Body of pancreas (tissue), 4 donors: ENCODE measurements at regions of chr16 and their contacts with region 1.

Region 1: GRCh38 chr16:4402439-4403132 is 13.8 kb downstream of the CORO7 start:
- DNase-seq: peak; percentile 79 to 89 (median 85)
- ATAC-seq: peak; percentile 93
- H3K4me3 ChIP-seq: no peak overlapping the region
- H3K27ac ChIP-seq: no peak overlapping the region
- H3K4me1 ChIP-seq: peaks cover 7% of the 10 kb centered on the region
- H3K27me3 ChIP-seq: no peaks in the 10 kb centered on the region
- CTCF ChIP-seq: peak; percentile 89 to 95 (median 92)
- POLR2A ChIP-seq: no peak

Region 2: DNA sequence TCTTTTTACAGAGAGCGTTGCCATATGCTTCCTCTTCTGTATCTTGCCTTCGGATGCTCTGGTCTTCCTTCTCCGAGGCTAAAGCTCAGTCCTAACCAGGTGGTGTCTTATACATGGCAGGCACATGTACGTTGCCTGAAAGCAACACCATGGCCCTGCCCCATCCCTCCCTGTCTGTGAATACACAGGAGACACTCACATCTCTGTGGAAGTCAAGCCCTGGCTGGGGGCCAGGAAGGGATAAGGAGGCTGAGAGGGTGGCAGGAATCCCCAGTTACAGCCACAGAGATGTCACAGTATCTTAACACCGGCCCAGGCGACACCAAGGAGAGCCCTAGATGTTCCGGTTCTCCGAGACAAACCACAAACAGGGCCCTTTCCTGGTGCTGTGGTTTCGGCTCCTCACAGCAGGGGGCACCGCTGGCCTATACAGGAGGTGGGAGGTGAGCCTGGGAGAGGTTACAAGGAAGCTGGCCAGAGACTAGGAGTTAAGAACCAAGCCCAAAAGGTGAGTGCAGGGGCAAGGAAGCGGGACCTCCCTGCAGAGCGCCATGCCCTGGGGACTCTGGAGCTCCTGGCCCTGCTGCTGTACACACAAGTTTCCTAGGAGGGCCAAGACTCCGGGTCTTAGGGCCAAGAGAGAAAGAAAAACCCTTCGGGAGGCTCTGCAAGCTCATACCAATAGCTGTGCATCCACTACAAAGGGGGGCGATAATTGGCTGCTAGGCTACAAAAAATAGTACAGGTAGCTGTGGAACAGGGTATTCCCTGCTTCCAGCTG is 202.4 kb before region 1 on chr16:
- intact Hi-C with region 1: loop called (anchors 10 kb)
- DNase-seq: peak; percentile 77 to 84 (median 78)
- ATAC-seq: peak; percentile 94
- H3K4me3 ChIP-seq: no peak overlapping the region
- H3K27ac ChIP-seq: no peak overlapping the region
- H3K4me1 ChIP-seq: peaks cover 7% of the 10 kb centered on the region
- H3K27me3 ChIP-seq: no peaks in the 10 kb centered on the region
- CTCF ChIP-seq: peak; percentile 52 to 88 (median 78)
- POLR2A ChIP-seq: no peak

Region 3: GRCh38 chr16:4232541-4233386 is 169.8 kb before region 1 on chr16:
- intact Hi-C with region 1: no loop called
- DNase-seq: no peak
- ATAC-seq: no peak
- H3K4me3 ChIP-seq: no peak overlapping the region
- H3K27ac ChIP-seq: no peak overlapping the region
- H3K4me1 ChIP-seq: no peaks in the 10 kb centered on the region
- H3K27me3 ChIP-seq: no peaks in the 10 kb centered on the region
- CTCF ChIP-seq: no peak
- POLR2A ChIP-seq: no peak

Region 4: GRCh38 chr16:4293822-4294457 is 108.6 kb before region 1 on chr16:
- intact Hi-C with region 1: loop called (anchors 10 kb)
- DNase-seq: peak in 3 of 4 donors; percentile 52 to 66 (median 59)
- ATAC-seq: peak; percentile 72
- H3K4me3 ChIP-seq: no peak overlapping the region
- H3K27ac ChIP-seq: peak overlapping the region in 2 of 4 donors; percentile 39 to 60
- H3K4me1 ChIP-seq: peaks cover 10% of the 10 kb centered on the region
- H3K27me3 ChIP-seq: no peaks in the 10 kb centered on the region
- CTCF ChIP-seq: no peak
- POLR2A ChIP-seq: no peak

Region 5: DNA sequence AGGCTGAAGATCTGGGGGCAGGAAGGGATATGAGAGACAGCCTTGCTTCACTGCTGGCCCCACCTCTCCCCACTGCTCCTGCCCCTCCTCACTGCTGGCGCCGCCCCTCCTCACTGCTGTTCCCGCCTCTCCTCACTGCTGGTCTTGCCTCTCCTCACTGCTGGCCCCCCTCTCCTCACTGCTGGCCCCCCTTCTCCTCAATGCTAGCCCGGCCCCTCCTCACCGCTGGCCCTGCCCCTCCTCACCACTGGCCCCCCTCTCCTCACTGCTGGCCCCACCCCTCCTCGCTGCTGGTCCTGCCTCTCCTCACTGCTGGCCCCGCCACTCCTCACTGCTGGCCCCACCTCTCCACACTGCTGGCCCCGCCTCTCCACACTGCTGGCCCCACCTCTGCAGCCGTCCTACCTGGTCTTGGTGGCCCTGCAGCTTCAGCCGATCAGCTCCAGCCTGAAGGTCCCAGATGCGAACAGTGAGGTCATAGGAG is 42.0 kb before region 1 on chr16:
- intact Hi-C with region 1: loop called (anchors 2 kb)
- DNase-seq: no peak
- ATAC-seq: peak; percentile 20
- H3K4me3 ChIP-seq: no peak overlapping the region
- H3K27ac ChIP-seq: no peak overlapping the region
- H3K4me1 ChIP-seq: no peaks in the 10 kb centered on the region
- H3K27me3 ChIP-seq: no peaks in the 10 kb centered on the region
- CTCF ChIP-seq: no peak
- POLR2A ChIP-seq: no peak